Activated CD8-positive, alpha-beta T cell treated with anti-CD3 and anti-CD28 coated beads, Interleukin-2, amount 10 ng/mL, durations not matched to agents 7 days and 5 days (primary cell): ENCODE measurements at regions of chr1 and their contacts with region 1.

Region 1: GRCh38 chr1:160997323-160998038 is 23.5 kb downstream of the F11R start:
- DNase-seq: peak; percentile 68
- ATAC-seq: peak; percentile 84
- H3K4me3 Mint-ChIP-seq: no peak overlapping the region
- H3K27ac Mint-ChIP-seq: no peak overlapping the region
- H3K4me1 Mint-ChIP-seq: no peaks in the 10 kb centered on the region
- H3K27me3 Mint-ChIP-seq: no peaks in the 10 kb centered on the region

Region 2: DNA sequence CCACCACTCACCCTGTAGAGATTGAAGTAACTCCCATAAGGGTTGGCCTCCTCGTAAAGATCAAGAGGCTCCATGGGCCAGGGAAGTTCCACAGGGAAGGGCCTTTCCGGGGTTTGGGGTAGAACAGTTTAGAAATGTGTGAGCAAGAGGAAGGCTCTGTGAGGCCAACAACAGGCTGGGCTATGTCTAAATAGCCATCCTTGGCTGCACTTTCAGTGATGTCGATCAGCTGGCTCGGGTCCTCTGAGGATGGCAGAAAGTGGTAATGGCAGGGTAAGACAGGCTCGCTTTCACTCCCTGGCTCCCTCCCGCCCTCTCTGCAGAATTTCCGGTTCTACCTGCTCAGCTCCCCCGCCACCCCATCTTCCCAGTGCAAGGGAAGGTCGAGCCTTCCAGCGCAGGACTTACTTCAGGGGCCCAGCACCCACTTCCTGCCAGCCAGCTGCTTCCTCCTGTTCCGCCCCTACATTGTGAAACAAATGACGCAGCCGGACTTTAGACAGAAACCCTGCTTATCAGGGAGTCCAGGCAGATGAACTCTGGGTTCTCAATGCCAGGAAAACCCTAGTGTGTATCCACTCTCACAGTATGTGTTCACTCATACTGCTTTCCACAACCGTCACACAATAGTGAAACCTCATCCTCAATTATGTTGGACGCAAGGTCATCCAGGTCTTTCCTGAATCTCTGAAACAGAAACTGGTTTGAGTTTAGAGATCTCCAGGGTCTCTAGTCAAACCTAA is 16.2 kb after region 1 on chr1:
- CTCF ChIA-PET with region 1: interaction called, 21 read pairs
- POLR2A ChIA-PET with region 1: interaction called, 5 read pairs
- DNase-seq: peak; percentile 80
- ATAC-seq: peak; percentile 91
- H3K4me3 Mint-ChIP-seq: peak overlapping the region; percentile 70
- H3K27ac Mint-ChIP-seq: peak overlapping the region; percentile 93
- H3K4me1 Mint-ChIP-seq: peaks cover 33% of the 10 kb centered on the region
- H3K27me3 Mint-ChIP-seq: no peaks in the 10 kb centered on the region

Region 3: GRCh38 chr1:161021165-161021960 is 23.9 kb after region 1 on chr1:
- CTCF ChIA-PET with region 1: interaction called, 22 read pairs
- POLR2A ChIA-PET with region 1: interaction called, 4 read pairs
- DNase-seq: peak; percentile 90
- ATAC-seq: peak; percentile 95
- H3K4me3 Mint-ChIP-seq: peak overlapping the region; percentile 87
- H3K27ac Mint-ChIP-seq: peak overlapping the region; percentile 79
- H3K4me1 Mint-ChIP-seq: peaks cover 43% of the 10 kb centered on the region
- H3K27me3 Mint-ChIP-seq: peaks cover 2% of the 10 kb centered on the region

Region 4: GRCh38 chr1:161038523-161039153 is 41.2 kb after region 1 on chr1 and contains the start of gene TSTD1:
- CTCF ChIA-PET with region 1: interaction called, 34 read pairs
- POLR2A ChIA-PET with region 1: no interaction called
- DNase-seq: peak; percentile 89
- ATAC-seq: peak; percentile 91
- H3K4me3 Mint-ChIP-seq: peak within 1 kb of the TSS; percentile 91
- H3K27ac Mint-ChIP-seq: peak within 1 kb of the TSS; percentile 94
- H3K4me1 Mint-ChIP-seq: peaks cover 63% of the 10 kb centered on the region
- H3K27me3 Mint-ChIP-seq: no peaks in the 10 kb centered on the region
- total RNA-seq, gene TSTD1: 63.2 to 63.3 TPM

Region 5: DNA sequence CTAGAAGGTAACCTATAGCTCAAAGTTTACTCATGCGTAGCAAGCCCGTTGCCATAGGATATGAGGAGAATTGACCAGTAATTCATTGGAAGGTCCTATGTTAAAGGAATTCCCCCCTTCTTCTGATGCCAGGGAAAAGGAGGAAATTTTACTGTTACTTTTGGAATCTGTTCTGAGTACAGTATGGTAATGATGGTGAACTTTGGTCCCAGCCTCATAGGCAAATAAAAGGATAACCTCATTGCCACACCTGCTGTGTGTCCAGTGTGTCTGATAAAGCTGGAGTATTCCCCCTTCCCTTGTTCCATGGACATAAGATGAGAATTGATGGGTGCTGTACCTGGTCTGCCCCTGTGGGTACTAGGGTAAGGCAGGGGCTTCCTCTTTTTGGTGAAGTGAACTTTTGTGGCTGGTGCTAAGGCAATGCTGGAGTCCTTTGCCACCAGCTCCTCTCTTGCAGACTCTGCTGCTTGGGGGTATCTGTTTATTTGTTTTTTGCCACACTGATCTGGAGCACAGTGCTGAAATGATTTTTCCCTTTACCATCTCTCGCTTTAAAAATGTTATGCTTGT is 290.1 kb after region 1 on chr1:
- CTCF ChIA-PET with region 1: no interaction called
- POLR2A ChIA-PET with region 1: no interaction called
- DNase-seq: no peak
- ATAC-seq: no peak
- H3K4me3 Mint-ChIP-seq: no peak overlapping the region
- H3K27ac Mint-ChIP-seq: no peak overlapping the region
- H3K4me1 Mint-ChIP-seq: no peaks in the 10 kb centered on the region
- H3K27me3 Mint-ChIP-seq: peaks cover 15% of the 10 kb centered on the region